ENCODE measurements at regions of chr14 and their contacts with region 1.

Region 1: GRCh38 chr14:94080471-94081289 is at the start of gene DDX24:
- DNase-seq: peak; percentile 98
- H3K4me3 Mint-ChIP-seq: peak within 1 kb of the TSS; percentile 98
- H3K27ac Mint-ChIP-seq: peak within 1 kb of the TSS; percentile 98
- H3K4me1 Mint-ChIP-seq: peaks cover 44% of the 10 kb centered on the region
- H3K27me3 Mint-ChIP-seq: no peaks in the 10 kb centered on the region
- total RNA-seq, gene DDX24: 190 to 200 TPM

Region 2: DNA sequence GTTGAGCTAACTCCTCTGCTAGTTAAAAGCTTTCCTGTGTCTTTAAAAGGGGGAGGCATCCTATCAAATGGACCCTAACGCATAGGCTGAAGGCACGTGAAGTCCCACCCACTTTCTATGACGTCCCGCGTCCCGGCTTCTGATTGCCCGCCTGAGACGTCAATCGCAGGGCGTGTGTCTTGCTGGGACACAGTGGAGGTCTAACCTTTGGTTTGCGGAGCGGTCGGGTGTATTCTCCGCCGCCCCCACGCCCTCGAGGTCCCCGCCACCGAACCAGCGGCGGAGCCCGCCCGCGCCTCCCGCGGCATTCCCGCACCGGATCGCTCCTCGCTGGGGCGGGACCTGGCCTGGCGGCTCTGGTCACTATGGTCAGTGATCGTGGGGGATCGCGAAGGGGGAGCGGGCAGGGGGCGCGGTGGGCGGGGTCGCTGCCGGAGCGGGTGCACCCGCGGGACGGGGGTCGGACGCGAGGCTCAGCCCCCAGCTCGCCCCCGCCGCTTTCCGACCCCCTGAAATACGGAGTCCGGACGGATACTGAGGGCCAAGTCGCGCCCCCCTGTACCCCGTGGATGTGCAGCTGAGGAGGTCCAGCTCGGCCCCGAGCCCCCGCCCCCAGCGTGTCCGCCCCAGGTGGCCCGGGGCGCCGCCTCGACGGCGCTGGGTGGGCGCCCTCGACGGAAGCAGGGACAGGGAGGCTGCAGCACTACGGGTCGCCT is 54.3 kb before region 1 on chr14 and contains the start of gene OTUB2:
- CTCF ChIA-PET with region 1: no interaction called
- intact Hi-C with region 1: loop called (anchors 1 kb)
- DNase-seq: peak; percentile 99
- H3K4me3 Mint-ChIP-seq: peak within 1 kb of the TSS; percentile 68
- H3K27ac Mint-ChIP-seq: no peak within 1 kb of the TSS
- H3K4me1 Mint-ChIP-seq: peaks cover 34% of the 10 kb centered on the region
- H3K27me3 Mint-ChIP-seq: no peaks in the 10 kb centered on the region
- total RNA-seq, gene OTUB2: 1.6 to 1.7 TPM

Region 3: DNA sequence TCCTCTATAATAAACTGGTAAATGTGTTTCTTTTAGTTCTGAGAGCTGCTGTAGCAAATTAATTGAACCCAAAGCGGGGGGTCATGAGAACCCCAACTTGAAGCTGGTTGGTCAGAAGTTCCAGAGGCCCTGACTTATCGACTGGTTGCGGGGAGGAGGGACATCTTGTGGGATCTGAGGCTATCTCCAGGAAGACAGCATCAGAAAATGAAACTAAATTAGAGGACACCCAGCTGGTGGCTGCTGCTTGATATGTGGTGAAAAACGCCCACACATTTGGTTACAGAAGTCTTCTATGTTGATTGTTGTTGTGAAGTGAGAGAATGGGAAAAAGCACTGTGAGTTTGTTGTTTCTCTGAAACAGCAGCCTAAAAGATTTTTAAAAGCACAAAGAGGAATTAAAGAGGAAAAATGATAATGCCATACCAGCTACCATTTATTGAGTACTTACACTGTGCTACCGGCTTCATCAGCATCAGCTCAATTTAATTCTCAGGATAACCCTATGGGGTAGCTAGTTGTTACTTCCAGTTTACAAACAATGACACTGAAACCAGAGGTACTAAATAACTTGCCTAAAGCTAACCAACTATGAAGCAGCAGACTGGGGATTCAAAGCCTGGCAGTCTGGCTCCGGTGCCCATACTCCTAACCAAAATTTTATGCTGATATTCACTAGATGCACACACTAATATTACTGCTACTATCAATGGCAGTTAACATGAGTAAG is 23.9 kb before region 1 on chr14:
- CTCF ChIA-PET with region 1: no interaction called
- intact Hi-C with region 1: loop called (anchors 2 kb)
- DNase-seq: peak; percentile 19
- H3K4me3 Mint-ChIP-seq: no peak overlapping the region
- H3K27ac Mint-ChIP-seq: peak overlapping the region; percentile 83
- H3K4me1 Mint-ChIP-seq: peaks cover 43% of the 10 kb centered on the region
- H3K27me3 Mint-ChIP-seq: no peaks in the 10 kb centered on the region

Region 4: DNA sequence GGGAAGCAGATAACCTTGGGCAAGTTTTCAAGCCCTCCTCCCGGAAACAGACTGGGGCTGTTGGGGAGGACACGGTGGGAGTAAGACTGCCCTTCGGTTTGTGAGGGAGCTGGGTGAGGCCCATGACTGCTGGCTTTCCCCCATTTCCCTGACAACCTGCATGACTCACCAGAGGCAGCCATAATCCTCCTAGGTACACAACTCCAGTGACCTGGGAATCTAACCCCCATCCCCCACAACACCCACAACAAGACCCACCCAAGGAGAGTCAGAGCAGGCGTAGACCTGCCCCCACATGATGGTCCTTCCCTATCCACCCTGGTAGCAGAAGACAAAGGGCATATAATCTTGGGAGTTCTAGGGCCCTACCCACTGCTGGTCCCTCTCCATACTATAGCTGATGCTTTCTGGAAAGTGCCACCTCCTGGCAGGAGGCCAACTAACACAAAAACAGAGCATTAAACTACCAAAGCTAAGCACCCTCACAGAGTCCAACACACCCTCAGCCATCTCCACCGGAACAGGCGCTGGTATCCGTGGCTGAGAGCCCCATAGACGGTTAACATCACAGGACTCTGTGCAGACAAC is 14.5 kb before region 1 on chr14:
- CTCF ChIA-PET with region 1: interaction called, 3 read pairs
- intact Hi-C with region 1: loop called (anchors 2 kb)
- DNase-seq: no peak
- H3K4me3 Mint-ChIP-seq: no peak overlapping the region
- H3K27ac Mint-ChIP-seq: peak overlapping the region; percentile 80
- H3K4me1 Mint-ChIP-seq: peaks cover 79% of the 10 kb centered on the region
- H3K27me3 Mint-ChIP-seq: no peaks in the 10 kb centered on the region

Region 5: DNA sequence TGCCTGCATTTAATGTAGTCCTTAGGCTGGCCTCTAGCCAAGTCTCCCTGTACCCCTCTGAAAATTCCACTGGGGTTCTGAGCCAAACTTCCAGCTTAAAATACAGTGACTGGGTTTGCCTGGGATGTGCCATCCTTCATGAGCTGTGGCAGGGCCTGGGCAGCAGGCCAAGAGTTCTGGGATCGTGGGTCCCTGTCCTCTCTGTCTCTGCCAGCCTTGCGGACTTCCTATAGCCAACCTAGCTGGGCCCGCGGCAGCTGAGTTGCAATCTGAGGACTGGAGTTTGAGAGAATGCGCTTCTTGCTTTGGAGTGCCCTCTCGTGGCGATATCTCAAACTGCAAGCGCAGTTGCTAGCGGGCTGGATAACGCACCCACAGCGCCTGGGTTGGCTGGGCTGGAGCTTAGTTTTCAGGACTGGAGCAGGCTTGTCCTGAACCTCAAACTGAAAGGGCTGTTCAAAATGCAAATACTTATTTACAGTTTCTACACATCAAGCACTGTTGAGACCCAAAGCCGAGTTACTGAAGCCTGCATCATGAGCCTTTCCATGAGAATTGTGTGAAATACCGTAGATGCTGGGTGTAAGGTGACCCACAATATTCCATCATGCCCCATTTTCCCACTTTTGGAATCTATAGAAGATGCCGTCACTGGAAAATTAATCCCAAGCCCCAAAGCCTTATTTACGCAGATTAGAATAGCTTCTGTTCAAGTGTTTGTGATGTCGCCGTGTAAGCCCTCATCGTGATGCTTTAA is 56.1 kb after region 1 on chr14:
- CTCF ChIA-PET with region 1: interaction called, 14 read pairs
- intact Hi-C with region 1: no loop called
- DNase-seq: peak; percentile 95
- H3K4me3 Mint-ChIP-seq: no peak overlapping the region
- H3K27ac Mint-ChIP-seq: no peak overlapping the region
- H3K4me1 Mint-ChIP-seq: peaks cover 2% of the 10 kb centered on the region
- H3K27me3 Mint-ChIP-seq: no peaks in the 10 kb centered on the region

Region 6: GRCh38 chr14:94203473-94204210 is 123.0 kb after region 1 on chr14:
- CTCF ChIA-PET with region 1: no interaction called
- intact Hi-C with region 1: no loop called
- DNase-seq: no peak
- H3K4me3 Mint-ChIP-seq: no peak overlapping the region
- H3K27ac Mint-ChIP-seq: no peak overlapping the region
- H3K4me1 Mint-ChIP-seq: peaks cover 3% of the 10 kb centered on the region
- H3K27me3 Mint-ChIP-seq: peaks cover 9% of the 10 kb centered on the region

Region 7: GRCh38 chr14:94392510-94392935 is 311.8 kb after region 1 on chr14:
- CTCF ChIA-PET with region 1: no interaction called
- intact Hi-C with region 1: loop called (anchors 1 kb)
- DNase-seq: peak; percentile 85
- H3K4me3 Mint-ChIP-seq: no peak overlapping the region
- H3K27ac Mint-ChIP-seq: peak overlapping the region; percentile 82
- H3K4me1 Mint-ChIP-seq: peaks cover 48% of the 10 kb centered on the region
- H3K27me3 Mint-ChIP-seq: no peaks in the 10 kb centered on the region